ENCODE measurements at regions of chr14 and their contacts with region 1.

Region 1: DNA sequence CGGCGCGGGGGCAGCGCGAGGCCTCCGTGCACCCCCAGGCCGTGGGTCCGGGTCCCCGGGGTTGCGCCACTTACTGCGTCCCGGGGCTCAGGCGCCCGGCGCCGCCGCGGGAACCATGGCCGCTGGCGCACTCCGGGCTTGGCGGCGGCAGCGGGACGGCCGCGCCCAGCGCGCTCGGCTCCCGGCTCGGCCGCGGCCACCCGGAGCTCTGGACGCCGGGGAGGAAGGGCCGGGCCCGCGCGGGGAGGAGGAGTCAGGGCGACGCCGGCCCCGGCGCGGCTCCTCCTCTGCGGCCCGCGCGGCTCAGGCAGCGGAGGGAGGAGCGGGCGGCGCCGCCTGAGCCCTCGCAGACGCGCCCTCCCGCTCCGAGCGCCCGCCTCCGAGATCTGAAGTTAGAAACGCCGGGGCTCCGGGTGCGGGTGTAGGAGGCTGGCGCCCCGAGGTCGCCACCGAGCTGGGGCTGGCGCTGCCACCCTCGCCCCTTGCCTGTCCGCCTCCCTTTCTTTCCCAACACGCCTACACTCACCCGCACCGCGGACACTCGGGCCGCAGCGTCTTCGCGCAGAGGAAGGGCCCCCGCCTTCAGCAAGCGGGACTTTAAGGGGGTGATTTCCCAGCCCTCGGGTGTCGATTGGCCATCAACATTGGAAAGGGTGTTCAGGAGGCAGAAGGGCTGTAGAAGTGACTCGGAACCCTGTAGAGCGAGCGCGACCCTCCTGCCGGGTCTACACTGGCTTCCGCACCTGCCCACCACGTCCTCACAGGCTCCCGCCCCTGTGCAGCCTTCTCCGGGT is at the start of gene NIN:
- DNase-seq: peak; percentile 77
- H3K4me3 Mint-ChIP-seq: peak within 1 kb of the TSS; percentile 92
- H3K27ac Mint-ChIP-seq: peak within 1 kb of the TSS; percentile 86
- H3K4me1 Mint-ChIP-seq: peaks cover 54% of the 10 kb centered on the region
- H3K27me3 Mint-ChIP-seq: peaks cover 6% of the 10 kb centered on the region
- total RNA-seq, gene NIN: 44.7 to 44.8 TPM

Region 2: GRCh38 chr14:50768680-50769079 is 62.4 kb before region 1 on chr14:
- CTCF ChIA-PET with region 1: no interaction called
- POLR2A ChIA-PET with region 1: no interaction called
- intact Hi-C with region 1: no loop called
- DNase-seq: no peak
- H3K4me3 Mint-ChIP-seq: no peak overlapping the region
- H3K27ac Mint-ChIP-seq: no peak overlapping the region
- H3K4me1 Mint-ChIP-seq: peaks cover 8% of the 10 kb centered on the region
- H3K27me3 Mint-ChIP-seq: no peaks in the 10 kb centered on the region

Region 3: DNA sequence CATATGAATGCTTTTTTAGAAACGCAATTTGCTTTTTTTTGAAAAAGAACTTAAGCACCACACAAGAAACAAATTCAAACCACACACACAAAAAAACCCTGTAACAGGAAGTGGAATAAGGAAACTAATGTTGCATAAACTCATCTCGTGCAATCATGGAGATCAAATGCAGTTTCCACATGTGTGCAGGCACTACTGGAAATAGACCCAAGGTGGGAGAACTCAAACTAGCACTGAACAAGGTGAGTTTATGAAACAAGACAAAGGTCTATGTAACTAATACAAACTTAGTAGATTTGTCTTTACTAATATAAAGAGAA is 17.6 kb before region 1 on chr14:
- CTCF ChIA-PET with region 1: no interaction called
- POLR2A ChIA-PET with region 1: interaction called, 4 read pairs
- intact Hi-C with region 1: loop called (anchors 1 kb)
- DNase-seq: no peak
- H3K4me3 Mint-ChIP-seq: peak overlapping the region; percentile 73
- H3K27ac Mint-ChIP-seq: peak overlapping the region; percentile 93
- H3K4me1 Mint-ChIP-seq: peaks cover 43% of the 10 kb centered on the region
- H3K27me3 Mint-ChIP-seq: no peaks in the 10 kb centered on the region

Measured in activated CD4-positive, alpha-beta memory T cell treated with anti-CD3 and anti-CD28 coated beads for 36 hours (primary cell).